PC-9 (cell line): ENCODE measurements at regions of chr10 and their contacts with region 1.

Region 1: DNA sequence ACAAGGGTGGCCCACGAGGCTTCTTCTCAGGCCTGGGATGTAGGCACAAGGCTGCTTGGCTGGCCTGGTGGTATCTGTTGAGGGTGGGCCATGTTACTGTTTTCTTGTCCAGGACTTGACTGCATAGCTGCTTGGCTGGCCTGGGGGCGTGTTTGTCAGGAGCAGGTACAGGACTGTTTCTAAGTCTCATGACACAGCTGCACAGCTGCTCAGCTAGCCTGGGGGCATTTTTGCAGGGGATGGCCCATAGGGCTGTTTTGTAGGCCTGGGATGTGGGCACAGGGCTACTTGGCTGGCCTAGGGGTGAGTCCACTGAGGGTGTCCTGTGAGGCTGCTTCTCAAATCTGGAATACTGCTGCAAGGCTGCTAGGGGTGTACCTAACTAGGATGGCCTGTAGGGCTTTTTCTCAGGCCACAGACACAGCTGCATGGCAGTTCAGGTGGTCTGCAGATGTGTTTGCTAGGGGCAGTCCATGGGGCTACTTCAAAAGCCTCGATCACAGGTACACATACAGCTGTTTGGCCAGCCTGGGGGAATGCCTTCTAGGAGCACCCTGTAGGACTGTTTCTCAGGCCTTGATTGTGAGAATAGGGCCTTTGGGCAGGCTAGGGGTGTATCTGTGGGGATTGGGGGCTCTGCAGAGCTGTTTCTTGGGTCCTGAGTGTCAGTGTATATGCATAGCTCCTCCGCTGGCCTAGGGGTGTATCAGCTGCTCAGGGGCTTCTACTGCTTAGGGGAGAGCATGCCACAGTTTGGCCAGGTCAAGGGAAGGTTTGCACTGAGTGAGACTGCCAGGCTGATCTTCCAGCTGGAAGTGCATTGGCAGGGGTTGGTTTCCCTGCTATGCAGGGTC is 26.6 kb upstream of the PLA2G12B start:
- DNase-seq: no peak
- H3K4me3 ChIP-seq: no peak overlapping the region
- H3K27ac ChIP-seq: no peak overlapping the region
- H3K4me1 ChIP-seq: no peaks in the 10 kb centered on the region
- H3K27me3 ChIP-seq: no peaks in the 10 kb centered on the region
- CTCF ChIP-seq: no peak

Region 2: GRCh38 chr10:71413581-71413980 is 1567.7 kb before region 1 on chr10:
- CTCF ChIA-PET with region 1: no interaction called
- POLR2A ChIA-PET with region 1: interaction called, 12 read pairs
- intact Hi-C with region 1: no loop called
- DNase-seq: no peak
- H3K4me3 ChIP-seq: no peak overlapping the region
- H3K27ac ChIP-seq: no peak overlapping the region
- H3K4me1 ChIP-seq: no peaks in the 10 kb centered on the region
- H3K27me3 ChIP-seq: no peaks in the 10 kb centered on the region
- CTCF ChIP-seq: no peak